Activated CD4-positive, alpha-beta T cell treated with anti-CD3 and anti-CD28 coated beads for 36 hours (primary cell): ENCODE measurements at regions of chr13 and their contacts with region 1.

Region 1: GRCh38 chr13:20418953-20419352 is 106.7 kb downstream of the CRYL1 start:
- DNase-seq: no peak
- ATAC-seq: no peak
- H3K4me3 Mint-ChIP-seq: no peak overlapping the region
- H3K27ac Mint-ChIP-seq: peak overlapping the region; percentile 2
- H3K4me1 Mint-ChIP-seq: peaks cover 46% of the 10 kb centered on the region
- H3K27me3 Mint-ChIP-seq: peaks cover 5% of the 10 kb centered on the region

Region 2: GRCh38 chr13:20461481-20461859 is 42.5 kb after region 1 on chr13:
- CTCF ChIA-PET with region 1: no interaction called
- POLR2A ChIA-PET with region 1: no interaction called
- intact Hi-C with region 1: loop called in 1 of 2 experiments (anchors 1 kb)
- DNase-seq: peak; percentile 59
- ATAC-seq: peak; percentile 83
- H3K4me3 Mint-ChIP-seq: no peak overlapping the region
- H3K27ac Mint-ChIP-seq: peak overlapping the region; percentile 74
- H3K4me1 Mint-ChIP-seq: peaks cover 41% of the 10 kb centered on the region
- H3K27me3 Mint-ChIP-seq: no peaks in the 10 kb centered on the region

Region 3: DNA sequence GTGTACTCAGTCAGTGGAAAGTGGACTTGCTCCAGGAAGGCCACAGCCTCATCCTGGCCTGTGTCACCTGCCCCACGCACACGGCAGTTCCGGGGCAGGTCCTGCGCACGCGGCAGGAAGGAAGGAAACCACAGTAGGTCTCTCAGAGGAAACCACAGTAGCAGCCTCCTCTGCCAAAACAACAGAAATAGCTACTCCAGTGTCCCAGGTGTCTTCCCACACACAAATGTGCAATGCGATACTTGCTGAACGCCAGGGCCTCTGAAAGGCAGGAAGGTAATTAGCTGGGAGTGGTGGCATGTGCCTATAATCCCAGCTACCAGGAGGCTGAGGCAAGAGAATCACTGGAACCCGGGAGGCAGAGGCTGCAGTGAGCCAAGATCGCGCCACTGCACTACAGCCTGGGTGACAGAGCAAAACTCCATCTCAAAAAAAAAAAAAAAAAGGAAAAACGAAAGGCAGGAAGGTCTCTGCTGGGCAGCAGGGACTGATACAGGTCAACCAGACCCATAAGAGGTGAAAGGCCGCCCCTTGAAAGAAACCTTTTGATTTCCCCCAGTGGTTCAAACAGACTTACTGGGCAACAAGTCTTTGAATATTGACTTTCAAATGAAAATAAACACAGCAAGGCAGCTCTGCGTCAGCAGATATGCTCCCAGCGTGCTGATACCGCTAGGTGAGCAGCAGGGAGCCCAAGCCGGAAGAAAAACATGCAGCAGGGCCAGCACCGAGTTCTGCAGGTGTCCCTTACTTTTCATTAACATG is 57.2 kb after region 1 on chr13:
- CTCF ChIA-PET with region 1: interaction called, 3 read pairs
- POLR2A ChIA-PET with region 1: interaction called, 5 read pairs
- intact Hi-C with region 1: loop called (anchors 1 kb)
- DNase-seq: peak; percentile 86
- ATAC-seq: peak; percentile 92
- H3K4me3 Mint-ChIP-seq: peak overlapping the region; percentile 67
- H3K27ac Mint-ChIP-seq: peak overlapping the region; percentile 92
- H3K4me1 Mint-ChIP-seq: peaks cover 40% of the 10 kb centered on the region
- H3K27me3 Mint-ChIP-seq: no peaks in the 10 kb centered on the region